GM12878 (cell line): ENCODE measurements at regions of chr13 and their contacts with region 1.

Region 1: GRCh38 chr13:41668130-41668757 is 210.9 kb downstream of the RGCC start:
- DNase-seq: peak; percentile 60
- ATAC-seq: peak; percentile 99
- H3K4me3 ChIP-seq: no peak overlapping the region
- H3K27ac ChIP-seq: no peak overlapping the region
- H3K4me1 ChIP-seq: no peaks in the 10 kb centered on the region
- H3K27me3 ChIP-seq: no peaks in the 10 kb centered on the region
- CTCF ChIP-seq: peak; percentile 73 to 91 (median 78)
- EP300 ChIP-seq: no peak
- POLR2A ChIP-seq: no peak
- RAD21 ChIP-seq: peak; percentile 97

Region 2: DNA sequence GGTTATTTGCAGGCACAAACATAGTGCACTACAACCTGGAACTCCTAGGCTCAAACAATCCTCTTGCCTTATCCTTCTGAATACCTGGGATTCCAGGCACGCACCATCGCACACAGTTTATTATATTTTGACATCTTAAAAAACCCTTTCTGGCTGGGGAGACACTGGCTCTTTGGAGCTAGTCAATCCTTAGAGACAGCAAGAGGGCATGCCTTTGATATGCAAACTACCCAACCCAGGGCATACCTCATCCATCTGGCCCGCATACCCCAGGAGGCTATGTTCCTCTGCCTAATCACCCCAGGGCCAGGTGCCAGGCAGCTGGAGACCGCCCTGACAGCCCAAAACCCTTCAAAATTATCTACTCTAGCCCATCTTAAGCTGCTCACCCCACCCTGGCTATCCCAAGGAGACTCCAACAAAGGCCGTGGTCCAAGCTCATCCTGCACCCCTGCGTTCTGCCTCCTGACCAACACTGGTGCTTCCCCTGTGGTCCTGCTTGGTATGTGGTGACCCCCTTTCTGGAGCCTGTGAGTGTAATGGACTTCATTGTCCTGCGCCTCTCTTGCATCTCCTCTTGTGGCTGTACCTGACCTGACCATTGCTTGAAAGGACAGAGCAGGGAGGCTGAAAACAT is 124.5 kb before region 1 on chr13:
- CTCF ChIA-PET with region 1: no interaction called
- POLR2A ChIA-PET with region 1: no interaction called
- RAD21 ChIA-PET with region 1: no interaction called
- SMC1A ChIA-PET with region 1: no interaction called
- in situ Hi-C with region 1: no loop called
- intact Hi-C with region 1: no loop called
- DNase-seq: no peak
- ATAC-seq: no peak
- H3K4me3 ChIP-seq: no peak overlapping the region
- H3K27ac ChIP-seq: no peak overlapping the region
- H3K4me1 ChIP-seq: no peaks in the 10 kb centered on the region
- H3K27me3 ChIP-seq: no peaks in the 10 kb centered on the region
- CTCF ChIP-seq: no peak
- EP300 ChIP-seq: no peak
- POLR2A ChIP-seq: no peak
- RAD21 ChIP-seq: no peak

Region 3: GRCh38 chr13:41658056-41658661 is 10.1 kb before region 1 on chr13:
- CTCF ChIA-PET with region 1: interaction called, 16 read pairs
- POLR2A ChIA-PET with region 1: no interaction called
- RAD21 ChIA-PET with region 1: interaction called, 13 read pairs
- SMC1A ChIA-PET with region 1: interaction called, 26 read pairs
- in situ Hi-C with region 1: no loop called
- intact Hi-C with region 1: no loop called
- DNase-seq: no peak
- ATAC-seq: no peak
- H3K4me3 ChIP-seq: no peak overlapping the region
- H3K27ac ChIP-seq: no peak overlapping the region
- H3K4me1 ChIP-seq: no peaks in the 10 kb centered on the region
- H3K27me3 ChIP-seq: no peaks in the 10 kb centered on the region
- CTCF ChIP-seq: no peak
- EP300 ChIP-seq: no peak
- POLR2A ChIP-seq: no peak
- RAD21 ChIP-seq: no peak

Region 4: GRCh38 chr13:41905600-41906254 is 237.5 kb after region 1 on chr13:
- CTCF ChIA-PET with region 1: interaction called, 17 read pairs
- POLR2A ChIA-PET with region 1: no interaction called
- RAD21 ChIA-PET with region 1: interaction called, 10 read pairs
- SMC1A ChIA-PET with region 1: interaction called, 11 read pairs
- in situ Hi-C with region 1: no loop called
- intact Hi-C with region 1: no loop called
- DNase-seq: no peak
- ATAC-seq: peak; percentile 100
- H3K4me3 ChIP-seq: no peak overlapping the region
- H3K27ac ChIP-seq: no peak overlapping the region
- H3K4me1 ChIP-seq: no peaks in the 10 kb centered on the region
- H3K27me3 ChIP-seq: no peaks in the 10 kb centered on the region
- CTCF ChIP-seq: peak; percentile 62 to 76 (median 69)
- EP300 ChIP-seq: no peak
- POLR2A ChIP-seq: no peak
- RAD21 ChIP-seq: peak; percentile 90

Region 5: GRCh38 chr13:41931337-41931736 is 263.1 kb after region 1 on chr13:
- CTCF ChIA-PET with region 1: no interaction called
- POLR2A ChIA-PET with region 1: no interaction called
- RAD21 ChIA-PET with region 1: no interaction called
- SMC1A ChIA-PET with region 1: no interaction called
- in situ Hi-C with region 1: no loop called
- intact Hi-C with region 1: no loop called
- DNase-seq: no peak
- ATAC-seq: no peak
- H3K4me3 ChIP-seq: no peak overlapping the region
- H3K27ac ChIP-seq: no peak overlapping the region
- H3K4me1 ChIP-seq: peaks cover 4% of the 10 kb centered on the region; the same call in 1 of the 2 replicates
- H3K27me3 ChIP-seq: no peaks in the 10 kb centered on the region
- CTCF ChIP-seq: no peak
- EP300 ChIP-seq: no peak
- POLR2A ChIP-seq: no peak
- RAD21 ChIP-seq: no peak

Region 6: GRCh38 chr13:41955605-41956004 is 287.4 kb after region 1 on chr13:
- CTCF ChIA-PET with region 1: interaction called, 11 read pairs
- POLR2A ChIA-PET with region 1: interaction called, 3 read pairs
- RAD21 ChIA-PET with region 1: interaction called, 5 read pairs
- SMC1A ChIA-PET with region 1: no interaction called
- in situ Hi-C with region 1: no loop called
- intact Hi-C with region 1: no loop called
- DNase-seq: no peak
- ATAC-seq: peak; percentile 64
- H3K4me3 ChIP-seq: no peak overlapping the region
- H3K27ac ChIP-seq: no peak overlapping the region
- H3K4me1 ChIP-seq: peaks cover 4% of the 10 kb centered on the region; the same call in 1 of the 2 replicates
- H3K27me3 ChIP-seq: no peaks in the 10 kb centered on the region
- CTCF ChIP-seq: no peak
- EP300 ChIP-seq: no peak
- POLR2A ChIP-seq: no peak
- RAD21 ChIP-seq: no peak

Region 7: GRCh38 chr13:42039946-42040729 is 371.9 kb after region 1 on chr13:
- CTCF ChIA-PET with region 1: interaction called, 14 read pairs
- POLR2A ChIA-PET with region 1: no interaction called
- RAD21 ChIA-PET with region 1: interaction called, 4 read pairs
- SMC1A ChIA-PET with region 1: no interaction called
- in situ Hi-C with region 1: no loop called
- intact Hi-C with region 1: no loop called
- DNase-seq: peak; percentile 25
- ATAC-seq: peak; percentile 82
- H3K4me3 ChIP-seq: peak overlapping the region; percentile 88
- H3K27ac ChIP-seq: peak overlapping the region; percentile 76
- H3K4me1 ChIP-seq: no peaks in the 10 kb centered on the region; the same call in 1 of the 2 replicates
- H3K27me3 ChIP-seq: no peaks in the 10 kb centered on the region
- CTCF ChIP-seq: no peak
- EP300 ChIP-seq: no peak
- POLR2A ChIP-seq: peak; percentile 97
- RAD21 ChIP-seq: no peak

Region 8: DNA sequence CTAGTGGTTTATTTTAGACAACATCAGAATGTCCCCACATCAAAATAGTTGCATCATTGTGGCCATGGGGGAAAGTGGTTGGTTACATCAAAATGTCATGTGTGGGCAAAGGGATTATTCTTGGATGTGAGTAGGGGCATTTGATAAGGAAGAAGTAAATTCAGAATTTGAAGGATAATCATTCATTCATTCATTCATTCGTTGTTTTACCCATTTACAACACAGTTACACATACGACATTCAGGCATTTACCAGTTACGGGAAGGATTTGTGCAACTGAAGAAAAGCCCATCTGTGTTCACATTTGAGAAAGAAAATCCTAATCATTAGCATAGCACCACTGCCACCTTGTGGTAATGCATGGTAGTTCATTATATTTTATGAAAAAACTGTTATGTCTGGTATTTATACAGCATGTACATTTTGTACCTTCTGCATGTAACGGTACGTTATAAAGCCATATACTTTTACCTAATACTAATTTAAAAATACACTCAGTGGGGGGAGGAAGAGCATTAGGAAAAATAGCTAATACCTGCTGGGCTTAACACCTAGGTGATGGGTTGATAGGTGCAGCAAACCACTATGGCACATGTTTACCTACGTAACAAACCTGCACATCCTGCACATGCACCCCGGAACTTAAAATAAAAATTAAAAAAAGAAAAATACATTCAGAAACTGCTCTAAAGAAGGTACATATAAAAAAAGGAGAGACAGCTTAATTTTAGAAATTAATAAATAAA is 442.3 kb after region 1 on chr13:
- CTCF ChIA-PET with region 1: interaction called, 150 read pairs
- POLR2A ChIA-PET with region 1: interaction called, 3 read pairs
- RAD21 ChIA-PET with region 1: interaction called, 72 read pairs
- SMC1A ChIA-PET with region 1: interaction called, 115 read pairs
- in situ Hi-C with region 1: loop called (anchors 5 kb)
- intact Hi-C with region 1: loop called (anchors 1 kb)
- DNase-seq: peak; percentile 68
- ATAC-seq: peak; percentile 74
- H3K4me3 ChIP-seq: no peak overlapping the region
- H3K27ac ChIP-seq: no peak overlapping the region
- H3K4me1 ChIP-seq: 0 out of 2 replicates have a peak, but pooled peaks cover 3% of the 10 kb centered on the region
- H3K27me3 ChIP-seq: no peaks in the 10 kb centered on the region
- CTCF ChIP-seq: peak; percentile 54 to 84 (median 66); a peak in 5 of 6 replicates
- EP300 ChIP-seq: no peak
- POLR2A ChIP-seq: no peak
- RAD21 ChIP-seq: peak; percentile 87

Region 9: DNA sequence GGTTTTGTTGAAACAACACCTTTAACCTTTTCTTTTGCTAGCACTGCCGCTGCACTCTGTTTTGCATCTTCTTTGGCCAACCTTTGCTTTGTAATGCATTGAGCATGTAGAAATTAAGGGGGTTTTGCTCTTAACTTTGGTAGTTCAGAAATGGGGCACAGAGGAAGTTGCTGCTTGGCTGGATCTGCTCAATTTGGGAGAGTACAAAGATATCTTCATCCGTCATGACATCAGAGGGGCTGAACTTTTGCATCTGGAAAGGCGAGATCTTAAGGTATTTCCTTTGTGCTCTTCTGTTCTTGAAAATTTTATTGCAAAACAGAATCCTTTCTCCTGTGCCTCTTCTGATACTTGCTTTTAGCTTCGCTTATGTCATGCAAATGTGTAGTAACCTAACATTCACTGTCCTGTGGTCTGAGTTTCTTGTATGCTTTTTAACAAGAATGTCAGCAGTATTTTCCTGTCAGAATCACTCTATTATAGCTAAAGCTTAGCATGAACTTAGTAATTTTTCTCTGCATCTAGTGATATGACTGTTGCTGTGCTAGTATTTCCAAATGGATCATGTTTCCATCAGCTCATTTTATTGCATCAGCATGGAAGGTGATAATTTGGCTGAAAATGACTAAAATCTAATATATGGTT is 553.0 kb after region 1 on chr13:
- CTCF ChIA-PET with region 1: interaction called, 21 read pairs
- POLR2A ChIA-PET with region 1: no interaction called
- RAD21 ChIA-PET with region 1: interaction called, 5 read pairs
- SMC1A ChIA-PET with region 1: interaction called, 11 read pairs
- in situ Hi-C with region 1: no loop called
- intact Hi-C with region 1: loop called (anchors 5 kb)
- DNase-seq: no peak
- ATAC-seq: no peak
- H3K4me3 ChIP-seq: no peak overlapping the region
- H3K27ac ChIP-seq: no peak overlapping the region
- H3K4me1 ChIP-seq: no peaks in the 10 kb centered on the region
- H3K27me3 ChIP-seq: no peaks in the 10 kb centered on the region
- CTCF ChIP-seq: no peak
- EP300 ChIP-seq: no peak
- POLR2A ChIP-seq: no peak
- RAD21 ChIP-seq: no peak